Calu3 (cell line): ENCODE measurements at regions of chr2 and their contacts with region 1.

Region 1: GRCh38 chr2:67650291-67651133 is 253.4 kb downstream of the ETAA1 start:
- DNase-seq: peak; percentile 85
- H3K4me3 Mint-ChIP-seq: peak overlapping the region; percentile 6
- H3K27ac Mint-ChIP-seq: peak overlapping the region; percentile 59
- H3K4me1 Mint-ChIP-seq: peaks cover 45% of the 10 kb centered on the region
- H3K27me3 Mint-ChIP-seq: no peaks in the 10 kb centered on the region
- CTCF ChIP-seq: peak; percentile 72

Region 2: GRCh38 chr2:66429071-66429477 is 1221.4 kb before region 1 on chr2:
- CTCF ChIA-PET with region 1: interaction called, 3 read pairs
- intact Hi-C with region 1: loop called (anchors 5 kb)
- DNase-seq: peak; percentile 34
- H3K4me3 Mint-ChIP-seq: no peak overlapping the region
- H3K27ac Mint-ChIP-seq: no peak overlapping the region
- H3K4me1 Mint-ChIP-seq: peaks cover 26% of the 10 kb centered on the region
- H3K27me3 Mint-ChIP-seq: no peaks in the 10 kb centered on the region
- CTCF ChIP-seq: peak; percentile 65

Region 3: DNA sequence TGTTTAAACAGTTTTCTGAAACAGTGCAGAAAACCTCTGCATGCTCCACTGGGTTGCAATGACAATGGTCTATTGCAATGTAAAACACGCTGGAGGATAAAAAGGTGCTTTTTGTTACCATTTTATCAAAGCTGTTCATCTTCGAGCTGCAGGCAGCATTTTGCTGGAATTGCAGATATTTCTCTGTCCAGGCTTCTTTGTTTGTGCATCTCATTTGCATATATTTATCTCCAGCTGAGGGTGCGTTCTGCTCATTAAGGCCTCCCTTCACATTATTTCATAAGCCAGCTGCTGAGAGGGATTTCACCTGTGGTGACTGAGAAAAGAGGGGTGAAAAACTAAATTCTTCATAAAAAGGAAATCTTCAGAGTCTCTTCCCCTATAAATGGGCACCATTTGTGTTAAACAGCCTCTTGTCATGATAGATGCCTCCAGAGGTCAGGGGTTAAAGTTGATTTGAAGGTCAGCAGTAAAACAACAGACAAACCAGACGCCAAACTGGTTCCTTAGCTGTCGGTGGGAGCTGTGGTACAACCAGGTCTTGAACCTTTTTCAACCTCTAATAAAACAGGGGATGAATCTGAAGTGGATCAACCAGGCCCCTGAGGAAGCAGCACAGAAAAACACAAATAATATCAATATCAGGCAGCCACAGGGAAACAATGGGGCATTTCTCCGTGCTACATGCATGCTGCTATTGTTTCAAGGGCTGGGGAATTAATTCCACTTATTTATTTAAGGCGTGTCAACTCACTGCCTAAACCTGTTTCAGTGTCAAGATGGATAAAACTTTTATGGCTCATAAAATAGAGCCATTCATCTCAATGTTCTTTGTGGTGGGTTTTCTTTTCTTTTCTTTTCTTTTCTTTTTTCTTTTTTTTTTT is 950.5 kb before region 1 on chr2:
- CTCF ChIA-PET with region 1: no interaction called
- intact Hi-C with region 1: loop called (anchors 10 kb)
- DNase-seq: peak; percentile 28
- H3K4me3 Mint-ChIP-seq: peak overlapping the region; percentile 28
- H3K27ac Mint-ChIP-seq: peak overlapping the region; percentile 57
- H3K4me1 Mint-ChIP-seq: peaks cover 23% of the 10 kb centered on the region
- H3K27me3 Mint-ChIP-seq: no peaks in the 10 kb centered on the region
- CTCF ChIP-seq: no peak

Region 4: DNA sequence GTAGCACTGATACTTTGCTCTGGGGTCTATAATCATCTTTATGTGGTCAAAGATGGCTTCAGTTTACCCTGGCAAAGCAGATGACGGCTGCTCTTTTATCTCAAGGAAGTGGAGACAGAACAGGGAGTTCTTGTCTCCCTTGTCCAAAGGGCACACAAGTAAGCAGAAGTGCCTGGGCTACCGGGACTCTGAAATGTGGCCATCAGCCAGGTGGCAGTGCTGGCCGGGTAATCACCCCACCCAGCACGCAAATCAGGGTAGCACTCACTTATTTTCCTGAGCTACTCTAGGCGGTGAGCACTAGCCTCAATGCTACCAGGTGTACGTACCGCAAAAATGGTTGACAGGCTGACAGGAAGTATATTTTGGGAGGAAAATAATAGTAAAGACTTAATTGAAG is 373.1 kb before region 1 on chr2:
- CTCF ChIA-PET with region 1: interaction called, 10 read pairs
- intact Hi-C with region 1: no loop called
- DNase-seq: peak; percentile 55
- H3K4me3 Mint-ChIP-seq: no peak overlapping the region
- H3K27ac Mint-ChIP-seq: peak overlapping the region; percentile 86
- H3K4me1 Mint-ChIP-seq: peaks cover 13% of the 10 kb centered on the region
- H3K27me3 Mint-ChIP-seq: no peaks in the 10 kb centered on the region
- CTCF ChIP-seq: no peak

Region 5: DNA sequence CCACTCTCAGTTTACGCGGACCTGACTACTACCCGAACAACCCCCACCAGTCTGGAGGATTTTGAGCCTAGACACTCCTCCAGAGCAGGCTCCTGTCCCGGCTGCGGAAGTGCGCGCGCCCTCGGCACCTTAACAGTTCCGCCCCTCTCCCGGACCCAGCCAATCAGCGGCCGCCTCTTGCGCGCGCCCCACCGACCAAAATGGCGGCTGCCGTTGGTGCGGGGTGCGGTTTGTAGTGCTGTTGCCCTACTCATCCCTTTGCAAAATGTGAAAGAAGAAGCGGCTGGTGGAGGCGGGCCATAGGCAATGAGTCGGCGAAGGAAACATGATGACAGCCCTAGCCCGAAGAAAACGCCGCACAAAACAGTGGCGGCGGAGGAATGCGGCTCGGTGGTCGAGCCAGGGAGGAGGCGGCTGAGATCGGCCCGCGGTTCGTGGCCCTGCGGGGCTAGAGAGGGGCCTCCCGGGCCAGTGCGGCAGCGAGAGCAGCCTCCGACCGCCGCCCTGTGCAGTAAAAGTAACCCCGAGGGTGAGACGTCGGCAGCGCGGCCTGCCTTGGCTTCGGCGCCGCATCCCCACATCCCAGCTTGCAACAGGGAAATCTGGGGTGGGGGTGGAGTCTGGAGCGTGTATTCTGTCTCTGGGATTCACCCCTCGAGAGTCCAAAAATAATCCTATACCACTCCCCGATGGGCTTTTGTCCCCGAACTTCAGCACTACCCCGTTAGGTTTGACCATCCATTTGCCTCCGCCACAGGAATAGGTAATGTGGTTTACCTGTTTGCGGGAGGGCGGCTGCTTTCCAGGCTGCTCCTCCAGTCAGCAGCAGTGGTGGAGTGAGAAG is 253.1 kb before region 1 on chr2 and contains the start of gene ETAA1:
- CTCF ChIA-PET with region 1: interaction called, 4 read pairs
- intact Hi-C with region 1: loop called (anchors 5 kb)
- DNase-seq: peak; percentile 93
- H3K4me3 Mint-ChIP-seq: peak within 1 kb of the TSS; percentile 88
- H3K27ac Mint-ChIP-seq: peak within 1 kb of the TSS; percentile 90
- H3K4me1 Mint-ChIP-seq: peaks cover 36% of the 10 kb centered on the region
- H3K27me3 Mint-ChIP-seq: no peaks in the 10 kb centered on the region
- CTCF ChIP-seq: no peak
- total RNA-seq, gene ETAA1: 12.2 and 12.6 TPM in 2 replicates

Region 6: GRCh38 chr2:67571785-67572718 is 78.5 kb before region 1 on chr2:
- CTCF ChIA-PET with region 1: interaction called, 8 read pairs
- intact Hi-C with region 1: loop called (anchors 2 kb)
- DNase-seq: peak; percentile 14
- H3K4me3 Mint-ChIP-seq: peak overlapping the region; percentile 39
- H3K27ac Mint-ChIP-seq: peak overlapping the region; percentile 99
- H3K4me1 Mint-ChIP-seq: peaks cover 40% of the 10 kb centered on the region
- H3K27me3 Mint-ChIP-seq: no peaks in the 10 kb centered on the region
- CTCF ChIP-seq: no peak

Region 7: GRCh38 chr2:67631483-67631882 is 19.0 kb before region 1 on chr2:
- CTCF ChIA-PET with region 1: no interaction called
- intact Hi-C with region 1: no loop called
- DNase-seq: no peak
- H3K4me3 Mint-ChIP-seq: no peak overlapping the region
- H3K27ac Mint-ChIP-seq: no peak overlapping the region
- H3K4me1 Mint-ChIP-seq: no peaks in the 10 kb centered on the region
- H3K27me3 Mint-ChIP-seq: no peaks in the 10 kb centered on the region
- CTCF ChIP-seq: no peak